ENCODE measurements at regions of chr2 and their contacts with region 1.

Region 1: GRCh38 chr2:57417007-57417406 is 629.6 kb upstream of the VRK2 start:
- DNase-seq: no peak
- ATAC-seq: no peak
- H3K4me3 ChIP-seq: no peak overlapping the region
- H3K27ac ChIP-seq: no peak overlapping the region
- H3K4me1 ChIP-seq: no peaks in the 10 kb centered on the region
- H3K27me3 ChIP-seq: no peaks in the 10 kb centered on the region
- CTCF ChIP-seq: no peak
- EP300 ChIP-seq: no peak
- POLR2A ChIP-seq: no peak
- RAD21 ChIP-seq: no peak

Region 2: DNA sequence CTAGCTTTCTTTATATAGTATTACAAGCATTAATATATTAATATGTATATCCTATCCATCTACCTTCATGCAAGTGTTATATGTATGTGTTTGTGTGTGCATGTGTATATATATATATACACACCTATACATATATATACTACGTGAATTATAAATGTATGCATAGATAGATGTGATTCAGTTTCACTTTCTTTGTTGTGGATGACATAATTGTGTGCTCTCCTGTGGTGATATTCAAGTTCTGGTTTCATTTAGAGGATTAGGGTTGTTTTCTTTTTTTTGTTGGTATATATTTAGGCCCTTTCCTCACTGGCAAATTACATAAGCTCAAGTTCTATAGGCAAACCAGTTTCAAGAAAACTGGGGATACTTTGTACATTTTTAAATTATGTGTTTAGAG is 1049.8 kb after region 1 on chr2:
- CTCF ChIA-PET with region 1: no interaction called
- POLR2A ChIA-PET with region 1: no interaction called
- in situ Hi-C with region 1: loop called (anchors 10 kb)
- intact Hi-C with region 1: no loop called
- DNase-seq: no peak
- ATAC-seq: no peak
- H3K4me3 ChIP-seq: no peak overlapping the region
- H3K27ac ChIP-seq: no peak overlapping the region
- H3K4me1 ChIP-seq: no peaks in the 10 kb centered on the region
- H3K27me3 ChIP-seq: no peaks in the 10 kb centered on the region
- CTCF ChIP-seq: no peak
- EP300 ChIP-seq: no peak
- POLR2A ChIP-seq: no peak
- RAD21 ChIP-seq: no peak